BJ (cell line): ENCODE measurements at regions of chr19 and their contacts with region 1.

Region 1: GRCh38 chr19:40633207-40633606 is 32.0 kb downstream of the LTBP4 start:
- DNase-seq: peak; percentile 36
- H3K4me3 ChIP-seq: no peak overlapping the region
- H3K27me3 ChIP-seq: no peaks in the 10 kb centered on the region; the same call in 1 of the 2 replicates
- CTCF ChIP-seq: no peak

Region 2: GRCh38 chr19:40139533-40140287 is 493.5 kb before region 1 on chr19:
- CTCF ChIA-PET with region 1: interaction called, 10 read pairs
- POLR2A ChIA-PET with region 1: no interaction called
- DNase-seq: peak; percentile 2
- H3K4me3 ChIP-seq: no peak overlapping the region
- H3K27me3 ChIP-seq: peaks cover 4% of the 10 kb centered on the region; the same call in 1 of the 2 replicates
- CTCF ChIP-seq: peak; percentile 68

Region 3: GRCh38 chr19:40529093-40529954 is 103.9 kb before region 1 on chr19:
- CTCF ChIA-PET with region 1: interaction called, 12 read pairs
- POLR2A ChIA-PET with region 1: no interaction called
- DNase-seq: peak; percentile 9
- H3K4me3 ChIP-seq: peak overlapping the region; percentile 42
- H3K27me3 ChIP-seq: peaks cover 4% of the 10 kb centered on the region
- CTCF ChIP-seq: peak; percentile 94

Region 4: GRCh38 chr19:40549007-40549708 is 84.0 kb before region 1 on chr19:
- CTCF ChIA-PET with region 1: interaction called, 41 read pairs
- POLR2A ChIA-PET with region 1: no interaction called
- DNase-seq: no peak
- H3K4me3 ChIP-seq: no peak overlapping the region
- H3K27me3 ChIP-seq: peaks cover 9% of the 10 kb centered on the region
- CTCF ChIP-seq: peak; percentile 50; the same call in 1 of the 2 replicates

Region 5: DNA sequence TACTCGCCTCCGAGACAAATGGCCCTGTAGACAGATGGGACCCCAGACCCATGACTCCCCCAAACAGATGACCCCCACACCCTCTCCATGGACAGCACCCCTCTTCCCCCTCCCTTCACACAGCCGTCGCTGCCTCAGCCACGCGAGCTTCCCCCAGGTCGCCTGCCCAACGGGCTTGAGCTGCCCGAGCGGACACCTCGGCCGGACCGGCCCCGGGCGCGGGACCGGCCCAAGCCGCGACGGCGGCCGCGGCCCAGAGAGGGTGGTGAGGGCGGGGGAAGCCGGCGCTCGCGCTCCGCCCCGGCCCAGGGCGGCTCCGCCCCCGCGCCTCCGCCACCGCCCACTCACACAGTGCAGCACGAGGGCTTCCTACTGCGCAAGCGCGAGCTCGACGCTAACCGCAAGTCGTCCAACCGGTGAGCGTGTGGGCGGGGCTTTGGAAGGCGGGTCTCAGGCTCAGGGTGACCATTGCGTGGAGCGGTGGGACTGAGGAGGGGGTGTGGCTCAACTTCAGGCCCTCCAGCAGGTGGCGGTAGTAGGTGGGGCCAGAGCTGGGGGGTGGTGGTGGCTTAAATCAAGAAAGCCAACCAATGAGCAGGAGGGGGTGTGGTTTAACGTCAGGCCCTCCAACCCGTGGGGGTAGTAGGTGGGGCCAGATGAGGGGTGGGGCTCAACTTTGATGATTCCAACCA is 62.7 kb before region 1 on chr19:
- CTCF ChIA-PET with region 1: interaction called, 14 read pairs
- POLR2A ChIA-PET with region 1: no interaction called
- DNase-seq: peak; percentile 97
- H3K4me3 ChIP-seq: peak overlapping the region; percentile 66
- H3K27me3 ChIP-seq: peaks cover 2% of the 10 kb centered on the region; the same call in 1 of the 2 replicates
- CTCF ChIP-seq: peak; percentile 66

Region 6: DNA sequence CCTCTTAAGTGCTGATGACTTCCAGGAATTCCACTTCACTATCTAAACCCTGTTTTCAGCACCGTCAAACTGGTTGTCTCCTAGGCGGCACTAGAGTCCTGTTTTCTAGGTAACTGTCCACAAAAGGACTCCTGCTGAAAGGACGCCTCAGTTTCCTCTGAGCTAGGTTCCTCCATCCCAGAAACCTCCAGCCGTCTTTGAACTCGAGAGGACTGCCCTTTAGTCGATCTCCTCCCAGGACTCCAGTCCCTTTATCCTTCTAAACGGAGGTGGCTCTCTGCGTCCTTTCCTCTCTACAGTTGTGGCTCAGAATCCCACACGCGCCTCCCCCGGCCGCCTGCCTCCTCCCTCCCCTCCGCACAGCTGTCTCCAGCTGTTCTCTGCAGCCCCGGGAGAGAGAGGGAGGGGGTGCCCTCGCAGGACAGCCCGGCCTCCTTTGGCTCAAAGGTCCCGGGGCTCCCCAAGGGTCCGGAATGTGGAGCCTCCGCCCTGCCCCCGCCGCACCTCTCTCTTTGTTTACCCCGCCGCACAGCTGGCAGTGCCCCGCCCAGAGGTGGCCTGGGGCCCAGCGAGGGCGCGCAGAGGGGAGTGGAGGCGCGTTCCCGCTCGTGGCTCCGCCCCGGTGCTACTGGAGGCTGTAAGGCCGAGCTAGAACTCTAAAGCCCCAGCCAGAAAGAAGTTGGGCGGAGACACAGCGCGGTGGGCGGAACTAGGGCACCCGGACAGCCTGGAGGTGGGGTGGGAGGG is 29.6 kb before region 1 on chr19:
- CTCF ChIA-PET with region 1: interaction called, 171 read pairs
- POLR2A ChIA-PET with region 1: no interaction called
- DNase-seq: peak; percentile 85
- H3K4me3 ChIP-seq: peak overlapping the region; percentile 44
- H3K27me3 ChIP-seq: 0 out of 2 replicates have a peak, but pooled peaks cover 2% of the 10 kb centered on the region
- CTCF ChIP-seq: peak; percentile 20; the same call in 1 of the 2 replicates

Region 7: DNA sequence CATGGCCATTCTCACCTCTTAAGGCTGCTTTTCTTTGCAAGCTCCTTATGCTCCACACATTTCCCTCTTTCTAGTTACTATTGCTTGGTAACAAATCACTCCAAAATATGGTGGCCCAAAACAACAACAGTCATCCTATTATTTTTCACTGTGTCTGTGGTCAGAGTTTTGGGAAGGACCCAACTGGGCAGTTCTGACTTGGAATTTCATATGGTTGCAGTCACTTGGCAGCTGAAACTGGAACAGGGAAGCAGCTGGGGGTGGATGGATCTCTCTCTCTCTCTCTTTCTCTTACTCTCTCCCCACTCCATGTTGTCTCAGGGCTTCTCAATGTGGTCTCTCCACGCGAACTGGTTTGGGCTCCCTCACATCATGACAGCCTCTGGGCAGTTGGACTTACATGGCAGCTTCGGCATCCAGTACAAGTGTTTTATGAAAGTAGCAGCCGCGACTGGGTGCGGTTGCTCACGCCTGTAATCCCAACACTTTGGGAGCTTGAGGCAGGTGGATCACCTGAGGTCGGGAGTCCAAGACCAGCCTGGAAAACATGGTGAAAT is 17.6 kb after region 1 on chr19:
- CTCF ChIA-PET with region 1: interaction called, 72 read pairs
- POLR2A ChIA-PET with region 1: no interaction called
- DNase-seq: peak; percentile 90
- H3K4me3 ChIP-seq: no peak overlapping the region
- H3K27me3 ChIP-seq: no peaks in the 10 kb centered on the region
- CTCF ChIP-seq: no peak

Region 8: GRCh38 chr19:40682431-40682964 is 49.3 kb after region 1 on chr19:
- CTCF ChIA-PET with region 1: no interaction called
- POLR2A ChIA-PET with region 1: no interaction called
- DNase-seq: no peak
- H3K4me3 ChIP-seq: no peak overlapping the region
- H3K27me3 ChIP-seq: no peaks in the 10 kb centered on the region
- CTCF ChIP-seq: no peak

Region 9: DNA sequence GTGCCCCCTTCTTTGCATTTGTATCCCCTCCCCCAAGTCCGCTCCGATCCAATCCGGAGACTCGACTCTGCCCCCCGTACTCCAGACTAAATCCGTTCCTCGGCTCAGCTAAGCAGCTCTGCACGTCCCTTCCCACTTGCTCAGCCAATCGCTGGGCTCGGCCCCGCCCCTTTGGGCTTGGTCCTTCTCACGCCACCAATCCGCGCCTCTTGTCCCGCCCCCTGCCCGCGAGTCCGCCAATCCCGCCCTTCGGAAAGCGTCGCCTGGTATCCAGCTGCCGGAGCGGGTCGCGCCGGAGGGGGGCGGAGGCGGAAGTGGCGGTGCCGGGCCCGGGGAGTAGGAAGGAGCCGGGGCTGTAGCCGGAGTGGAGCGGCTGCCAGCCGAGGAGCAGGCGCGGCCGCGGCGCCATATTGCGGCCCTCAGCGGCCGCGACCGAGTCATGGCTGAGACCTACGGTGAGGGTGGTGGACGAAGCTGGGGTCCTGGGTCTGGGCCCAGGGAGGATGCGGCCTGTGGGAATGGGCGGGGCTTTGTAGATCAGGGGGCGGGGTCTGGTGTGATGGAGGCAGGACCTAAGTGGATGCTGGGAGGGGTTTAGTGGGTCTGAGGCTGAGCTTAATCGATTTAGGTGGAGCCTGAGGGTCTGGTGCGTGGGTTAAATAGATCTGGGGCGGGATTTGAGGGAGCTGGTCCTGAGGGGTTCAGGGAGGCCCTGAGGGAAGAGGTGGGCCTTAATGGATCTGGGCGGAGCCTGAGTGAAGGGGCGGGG is 144.9 kb after region 1 on chr19 and contains the start of gene RAB4B:
- CTCF ChIA-PET with region 1: no interaction called
- POLR2A ChIA-PET with region 1: no interaction called
- DNase-seq: peak; percentile 98
- H3K4me3 ChIP-seq: peak within 1 kb of the TSS; percentile 83
- H3K27me3 ChIP-seq: no peaks in the 10 kb centered on the region
- CTCF ChIP-seq: no peak
- polyA plus RNA-seq, gene RAB4B: 16.5 and 25.4 TPM in 2 replicates